ENCODE measurements at regions of chr11 and their contacts with region 1.

Region 1: DNA sequence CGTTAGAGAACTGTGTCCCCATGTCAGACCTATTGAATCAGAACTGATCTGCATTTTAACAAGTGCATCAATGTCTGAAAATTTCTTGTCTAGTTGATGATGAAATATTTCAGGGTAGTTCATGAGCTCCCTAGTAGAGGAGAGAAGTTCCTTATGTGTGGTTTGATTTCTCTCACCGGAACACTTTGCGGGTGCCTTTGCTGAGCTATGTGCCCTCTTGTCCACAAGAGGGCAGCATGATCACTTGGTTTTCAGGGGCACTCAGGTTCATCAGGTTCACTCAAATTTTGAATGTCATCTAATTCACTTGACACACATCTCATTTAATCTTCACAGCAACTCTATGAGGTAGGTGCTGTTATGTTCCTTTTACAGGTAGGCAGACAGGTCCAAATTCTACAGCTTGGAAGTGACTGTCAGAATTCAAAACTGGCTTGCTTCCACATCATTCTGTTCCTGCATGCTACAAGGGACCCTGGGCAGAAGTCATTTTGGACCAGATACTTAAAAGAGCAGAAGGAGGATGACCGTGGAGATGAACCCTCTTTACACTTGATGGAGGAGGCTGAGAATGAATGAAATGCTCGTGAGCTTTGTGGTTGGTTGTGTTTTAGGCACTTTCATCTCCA is 55.6 kb downstream of the P4HA3 start:
- DNase-seq: peak; percentile 60
- ATAC-seq: peak; percentile 81
- H3K4me3 Mint-ChIP-seq: no peak overlapping the region
- H3K27ac Mint-ChIP-seq: no peak overlapping the region
- H3K4me1 Mint-ChIP-seq: peaks cover 3% of the 10 kb centered on the region
- H3K27me3 Mint-ChIP-seq: no peaks in the 10 kb centered on the region
- CTCF ChIP-seq: peak; percentile 85

Region 2: GRCh38 chr11:74237541-74237940 is 18.3 kb before region 1 on chr11:
- CTCF ChIA-PET with region 1: interaction called, 10 read pairs
- POLR2A ChIA-PET with region 1: no interaction called
- intact Hi-C with region 1: no loop called
- DNase-seq: no peak
- ATAC-seq: no peak
- H3K4me3 Mint-ChIP-seq: no peak overlapping the region
- H3K27ac Mint-ChIP-seq: no peak overlapping the region
- H3K4me1 Mint-ChIP-seq: peaks cover 5% of the 10 kb centered on the region
- H3K27me3 Mint-ChIP-seq: no peaks in the 10 kb centered on the region
- CTCF ChIP-seq: no peak

Region 3: DNA sequence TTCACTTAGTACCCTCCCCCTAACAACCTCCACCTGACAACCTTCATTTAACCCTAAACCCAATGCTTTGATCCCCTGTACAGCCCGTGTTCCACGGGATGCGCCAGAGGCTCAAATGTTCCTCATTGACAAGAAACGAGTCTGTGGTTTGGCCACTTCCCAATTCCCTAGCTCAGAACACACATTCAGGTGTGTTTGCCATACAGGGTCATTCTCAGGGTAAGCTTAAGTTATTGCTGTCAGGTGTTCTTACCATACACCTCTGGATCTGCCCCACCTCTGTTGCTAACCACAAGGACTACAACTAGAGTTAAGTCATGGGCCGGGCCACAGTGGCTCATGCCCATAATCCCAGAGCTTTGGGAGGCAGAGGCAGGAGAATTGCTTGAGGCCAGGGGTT is 290.9 kb after region 1 on chr11:
- CTCF ChIA-PET with region 1: no interaction called
- POLR2A ChIA-PET with region 1: no interaction called
- intact Hi-C with region 1: no loop called
- DNase-seq: no peak
- ATAC-seq: no peak
- H3K4me3 Mint-ChIP-seq: no peak overlapping the region
- H3K27ac Mint-ChIP-seq: no peak overlapping the region
- H3K4me1 Mint-ChIP-seq: no peaks in the 10 kb centered on the region
- H3K27me3 Mint-ChIP-seq: peaks cover 2% of the 10 kb centered on the region
- CTCF ChIP-seq: no peak